ENCODE measurements at regions of chr2 and their contacts with region 1.

Region 1: GRCh38 chr2:112481050-112481527 is 867 bp upstream of the TTL start:
- DNase-seq: peak; percentile 82 to 90
- ATAC-seq: peak; percentile 84 to 94 (median 89)
- H3K4me3 ChIP-seq: peak overlapping the region; percentile 89
- H3K27ac ChIP-seq: peak overlapping the region; percentile 80
- H3K4me1 ChIP-seq: peaks cover 16% of the 10 kb centered on the region
- H3K27me3 ChIP-seq: no peaks in the 10 kb centered on the region
- CTCF ChIP-seq: peak; percentile 83

Region 2: GRCh38 chr2:112031473-112032223 is 449.4 kb before region 1 on chr2:
- intact Hi-C with region 1: no loop called
- DNase-seq: no peak
- ATAC-seq: no peak
- H3K4me3 ChIP-seq: no peak overlapping the region
- H3K27ac ChIP-seq: no peak overlapping the region
- H3K4me1 ChIP-seq: peaks cover 9% of the 10 kb centered on the region
- H3K27me3 ChIP-seq: peaks cover 0 to 5% (median 0%) of the 10 kb centered on the region in 3 donors
- CTCF ChIP-seq: no peak

Region 3: DNA sequence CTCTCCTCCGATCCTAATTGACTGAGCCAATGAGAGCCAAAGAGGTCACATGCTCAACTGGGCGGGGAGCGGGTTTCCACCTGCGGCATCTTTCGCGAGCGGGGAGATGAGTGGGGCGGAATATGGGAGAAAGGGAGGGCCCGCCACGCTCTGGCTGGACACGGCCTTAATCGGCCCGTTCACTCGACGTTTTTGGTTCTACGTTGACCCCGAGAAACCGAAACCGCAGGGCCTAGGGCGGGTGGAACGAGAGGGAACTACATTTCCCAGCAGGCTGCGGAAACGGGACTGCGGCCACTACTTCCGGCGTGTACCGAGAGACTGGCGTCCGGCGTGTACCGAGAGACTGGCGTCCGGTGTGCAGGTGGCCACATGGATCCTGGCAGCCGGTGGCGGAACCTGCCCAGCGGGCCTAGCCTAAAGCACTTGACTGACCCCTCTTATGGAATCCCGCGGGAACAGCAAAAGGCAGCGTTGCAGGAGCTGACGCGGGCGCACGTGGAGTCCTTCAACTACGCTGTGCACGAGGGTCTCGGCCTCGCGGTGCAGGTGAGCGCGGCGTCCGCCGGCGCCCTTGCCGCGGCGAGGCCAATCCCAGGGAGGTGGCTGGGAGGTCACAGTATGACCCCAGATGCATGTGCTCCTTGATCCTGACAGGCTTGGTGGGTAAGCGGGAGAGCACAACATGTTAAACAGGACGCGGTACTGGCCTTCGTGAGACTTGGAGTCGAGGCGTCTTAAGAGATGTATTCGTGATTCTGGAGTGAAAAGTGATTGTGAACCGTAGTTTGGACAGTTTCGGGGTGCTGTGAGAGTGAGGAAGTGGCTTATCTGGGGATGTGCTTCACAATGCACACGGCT is 61.3 kb after region 1 on chr2 and contains the start of gene POLR1B:
- intact Hi-C with region 1: loop called (anchors 5 to 10 kb)
- DNase-seq: peak; percentile 86 to 94
- ATAC-seq: peak; percentile 96 to 99 (median 97)
- H3K4me3 ChIP-seq: peak within 1 kb of the TSS; percentile 90
- H3K27ac ChIP-seq: peak within 1 kb of the TSS; percentile 83
- H3K4me1 ChIP-seq: peaks cover 20% of the 10 kb centered on the region
- H3K27me3 ChIP-seq: no peaks in the 10 kb centered on the region
- CTCF ChIP-seq: no peak
- total RNA-seq, gene POLR1B: 12.2 to 22.8 (median 19.4) TPM

Measured in psoas muscle (tissue), 8 donors.